PC-3 (cell line): ENCODE measurements at regions of chr2 and their contacts with region 1.

Region 1: GRCh38 chr2:46650556-46651001 is 171.2 kb downstream of the TMEM247 start:
- DNase-seq: peak; percentile 93
- ATAC-seq: peak; percentile 72
- H3K4me3 ChIP-seq: no peak overlapping the region
- H3K27ac ChIP-seq: no peak overlapping the region
- H3K4me1 ChIP-seq: peaks cover 35% of the 10 kb centered on the region
- H3K27me3 ChIP-seq: no peaks in the 10 kb centered on the region
- CTCF ChIP-seq: peak; percentile 95

Region 2: GRCh38 chr2:46601328-46601963 is 49.1 kb before region 1 on chr2:
- CTCF ChIA-PET with region 1: no interaction called
- POLR2A ChIA-PET with region 1: no interaction called
- intact Hi-C with region 1: loop called (anchors 1 kb)
- DNase-seq: peak; percentile 49
- ATAC-seq: peak; percentile 29; the same call in 1 of the 2 replicates
- H3K4me3 ChIP-seq: no peak overlapping the region
- H3K27ac ChIP-seq: no peak overlapping the region
- H3K4me1 ChIP-seq: no peaks in the 10 kb centered on the region
- H3K27me3 ChIP-seq: no peaks in the 10 kb centered on the region
- CTCF ChIP-seq: peak; percentile 73

Region 3: GRCh38 chr2:46632349-46632748 is 18.2 kb before region 1 on chr2:
- CTCF ChIA-PET with region 1: interaction called, 3 read pairs
- POLR2A ChIA-PET with region 1: interaction called, 5 read pairs
- intact Hi-C with region 1: loop called (anchors 1 kb)
- DNase-seq: peak; percentile 86
- ATAC-seq: peak; percentile 40; the same call in 1 of the 2 replicates
- H3K4me3 ChIP-seq: no peak overlapping the region
- H3K27ac ChIP-seq: no peak overlapping the region
- H3K4me1 ChIP-seq: peaks cover 8% of the 10 kb centered on the region; the same call in 1 of the 2 replicates
- H3K27me3 ChIP-seq: no peaks in the 10 kb centered on the region
- CTCF ChIP-seq: peak; percentile 77

Region 4: DNA sequence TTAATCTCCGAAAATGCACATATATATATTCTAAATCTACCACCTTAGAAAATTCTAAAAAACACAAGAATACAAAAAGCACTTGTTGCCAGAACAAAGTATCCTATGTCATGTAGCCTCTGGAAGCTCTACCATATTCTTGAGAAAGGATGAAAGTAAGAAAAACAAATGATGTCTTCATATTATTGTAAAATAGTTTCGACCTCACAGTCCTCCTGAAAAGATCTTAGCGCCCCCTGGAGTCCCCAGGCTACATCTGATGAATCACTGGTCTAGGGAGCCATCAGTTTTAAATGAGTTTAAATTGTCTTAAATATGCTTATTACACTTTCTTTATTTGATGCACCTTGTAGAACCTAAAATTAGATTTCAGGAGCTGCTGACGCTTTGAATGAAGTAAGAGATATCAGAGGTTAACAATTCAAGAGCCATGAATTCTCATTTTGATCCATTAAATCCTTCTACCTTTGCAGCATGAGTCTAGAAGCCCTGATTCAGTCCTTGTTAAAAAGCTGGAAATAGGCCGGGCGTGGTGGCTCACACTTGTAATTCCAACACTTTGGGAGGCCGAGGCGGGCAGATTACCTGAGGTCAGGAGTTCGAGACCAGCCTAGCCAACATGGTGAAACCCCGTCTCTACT is 126.2 kb after region 1 on chr2:
- CTCF ChIA-PET with region 1: no interaction called
- POLR2A ChIA-PET with region 1: no interaction called
- intact Hi-C with region 1: loop called (anchors 2 kb)
- DNase-seq: peak; percentile 77
- ATAC-seq: peak; percentile 60
- H3K4me3 ChIP-seq: no peak overlapping the region
- H3K27ac ChIP-seq: no peak overlapping the region
- H3K4me1 ChIP-seq: peaks cover 29% of the 10 kb centered on the region
- H3K27me3 ChIP-seq: no peaks in the 10 kb centered on the region
- CTCF ChIP-seq: peak; percentile 91

Region 5: DNA sequence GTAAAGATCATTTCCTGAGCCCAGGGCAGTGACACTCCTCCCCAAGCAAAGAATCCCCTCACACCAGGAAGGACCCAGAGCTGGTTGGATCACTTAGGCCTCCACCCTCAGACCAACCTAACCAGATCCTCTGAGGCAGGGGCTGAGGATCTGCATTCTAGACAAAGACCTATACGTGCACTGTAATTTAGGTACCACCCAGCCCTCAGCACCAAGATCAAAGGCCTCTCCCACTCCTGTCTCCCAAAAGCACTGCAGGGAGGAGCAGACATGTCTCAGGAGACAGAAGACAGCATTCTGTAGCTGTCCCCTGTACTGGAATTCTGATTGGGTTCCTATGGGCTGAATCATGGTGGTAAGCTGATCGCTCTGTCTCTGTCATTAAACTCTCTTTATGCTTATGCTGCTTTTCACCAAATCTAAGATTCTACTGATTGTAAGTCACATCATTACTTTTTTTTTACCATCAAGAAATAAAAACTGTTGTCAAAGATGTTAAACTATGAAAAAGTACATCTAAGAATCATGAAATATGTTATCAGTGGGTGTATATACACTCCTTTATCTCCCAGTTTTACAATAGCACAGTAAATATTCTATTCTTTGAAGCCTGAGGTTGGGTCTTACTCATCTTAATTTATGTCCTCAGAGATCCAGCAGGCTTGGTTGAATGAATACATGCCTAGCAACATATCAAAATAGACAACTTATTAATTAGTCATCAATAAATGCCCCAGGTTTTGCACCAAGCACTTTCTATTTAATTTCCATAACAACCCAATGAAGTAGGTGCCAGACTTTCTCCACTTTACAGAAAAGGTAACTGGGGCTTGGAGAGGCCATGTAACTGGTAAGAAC is 236.7 kb after region 1 on chr2:
- CTCF ChIA-PET with region 1: no interaction called
- POLR2A ChIA-PET with region 1: no interaction called
- intact Hi-C with region 1: loop called (anchors 2 kb)
- DNase-seq: peak; percentile 25
- ATAC-seq: no peak
- H3K4me3 ChIP-seq: no peak overlapping the region
- H3K27ac ChIP-seq: peak overlapping the region; percentile 19
- H3K4me1 ChIP-seq: peaks cover 23% of the 10 kb centered on the region
- H3K27me3 ChIP-seq: no peaks in the 10 kb centered on the region
- CTCF ChIP-seq: no peak